ENCODE measurements at regions of chr11 and their contacts with region 1.

Region 1: DNA sequence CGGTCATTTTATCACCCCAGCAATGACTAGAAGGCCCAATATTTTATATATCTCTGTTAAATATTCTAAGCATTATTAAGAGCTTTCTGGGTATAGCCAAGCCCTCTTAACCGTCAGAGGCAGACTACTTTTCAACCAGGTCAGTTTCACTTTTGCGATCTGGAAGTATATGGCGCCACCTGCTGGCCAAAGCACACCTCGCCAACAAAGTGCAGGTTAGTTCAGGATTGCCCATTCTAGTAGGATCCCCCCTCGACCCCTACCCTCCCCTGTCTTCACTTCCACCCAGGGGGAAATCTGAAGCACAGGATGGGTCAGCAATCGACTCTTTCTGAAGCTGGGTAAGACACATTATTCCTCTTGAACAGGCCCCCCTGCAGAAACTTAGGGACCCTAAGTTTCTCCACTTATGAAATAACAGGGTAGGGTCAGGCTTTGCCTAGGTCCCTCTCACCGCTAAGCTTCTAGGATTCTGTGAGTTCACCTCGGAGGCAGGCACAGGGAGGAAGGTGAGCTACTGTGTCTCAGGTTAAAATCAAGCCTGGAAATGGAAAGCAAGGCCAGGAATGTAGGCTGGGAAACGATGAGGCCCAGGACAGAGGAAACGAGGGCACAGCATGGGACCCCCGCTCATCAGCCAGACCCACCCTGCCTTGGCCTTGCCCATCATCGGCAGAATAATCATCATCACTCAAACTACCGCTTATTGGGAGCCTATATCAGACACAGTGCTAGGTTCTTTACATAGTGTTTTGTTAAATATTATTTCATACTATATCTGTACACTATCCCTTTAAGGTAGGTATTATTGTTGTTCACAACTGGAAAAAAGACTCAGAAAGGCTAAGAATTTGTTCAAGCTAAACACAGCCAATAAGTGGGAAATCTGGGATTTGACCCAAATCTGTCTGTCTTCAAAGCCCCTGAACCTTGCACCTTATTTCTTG is 35.6 kb downstream of the KCNJ1 start:
- DNase-seq: peak; percentile 53 to 58
- ATAC-seq: peak; percentile 79 to 89
- H3K4me3 ChIP-seq: peak overlapping the region in 3 of 4 donors; percentile 19 to 34 (median 26)
- H3K27ac ChIP-seq: no peak overlapping the region
- H3K4me1 ChIP-seq: peaks cover 3 to 5% of the 10 kb centered on the region in 2 donors
- H3K27me3 ChIP-seq: peaks cover 0 to 3% (median 0%) of the 10 kb centered on the region in 3 donors
- CTCF ChIP-seq: peak; percentile 40 to 89 (median 82)
- POLR2A ChIP-seq: no peak

Region 2: DNA sequence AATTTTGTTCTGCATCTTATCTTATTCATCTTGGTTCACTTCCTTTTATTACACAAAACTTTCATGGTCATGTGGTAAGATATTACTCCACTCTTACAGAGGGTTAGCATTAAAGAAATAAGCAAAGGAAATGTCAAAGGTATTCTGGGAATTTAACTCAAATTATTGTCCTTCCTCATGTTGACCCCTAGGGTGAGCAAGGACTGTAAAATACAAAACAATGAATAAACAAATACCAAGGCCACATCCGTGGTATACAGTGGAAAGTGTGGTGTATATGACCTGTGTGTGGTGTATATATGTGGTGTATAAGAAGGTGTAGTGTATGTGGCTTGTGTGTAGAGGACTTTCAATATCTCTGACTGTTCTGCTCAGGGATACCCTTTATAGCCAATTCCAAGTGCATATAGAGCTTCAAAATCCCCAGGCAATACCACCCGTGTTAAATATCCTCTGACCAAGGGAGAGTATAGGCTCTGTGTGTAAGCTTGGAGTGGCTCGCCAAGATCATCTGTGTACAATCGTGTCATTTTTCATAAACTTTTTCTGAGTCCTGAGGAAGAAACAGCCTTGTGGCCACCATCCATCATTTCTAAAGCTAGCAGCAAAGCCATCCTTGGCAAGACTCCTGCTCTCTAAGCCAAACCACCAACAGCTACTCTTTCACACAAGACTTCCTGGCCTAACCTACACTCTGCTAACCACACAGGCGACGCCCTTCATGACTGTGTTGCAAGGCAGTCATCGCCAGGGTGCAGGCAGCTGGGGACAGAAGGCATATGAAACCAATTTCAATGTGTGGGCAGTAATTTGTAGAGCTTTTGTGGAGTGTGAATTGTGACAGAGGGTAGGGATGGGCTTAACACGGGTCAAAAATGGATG is 792.1 kb before region 1 on chr11:
- in situ Hi-C with region 1: loop called in 2 of 4 experiments (anchors 25 kb)
- intact Hi-C with region 1: no loop called
- DNase-seq: peak in 1 of 2 donors; percentile 51
- ATAC-seq: peak; percentile 58 to 70
- H3K4me3 ChIP-seq: no peak overlapping the region
- H3K27ac ChIP-seq: no peak overlapping the region
- H3K4me1 ChIP-seq: no peaks in the 10 kb centered on the region
- H3K27me3 ChIP-seq: no peaks in the 10 kb centered on the region
- CTCF ChIP-seq: peak in 1 of 5 experiments; percentile 14
- POLR2A ChIP-seq: no peak

Region 3: DNA sequence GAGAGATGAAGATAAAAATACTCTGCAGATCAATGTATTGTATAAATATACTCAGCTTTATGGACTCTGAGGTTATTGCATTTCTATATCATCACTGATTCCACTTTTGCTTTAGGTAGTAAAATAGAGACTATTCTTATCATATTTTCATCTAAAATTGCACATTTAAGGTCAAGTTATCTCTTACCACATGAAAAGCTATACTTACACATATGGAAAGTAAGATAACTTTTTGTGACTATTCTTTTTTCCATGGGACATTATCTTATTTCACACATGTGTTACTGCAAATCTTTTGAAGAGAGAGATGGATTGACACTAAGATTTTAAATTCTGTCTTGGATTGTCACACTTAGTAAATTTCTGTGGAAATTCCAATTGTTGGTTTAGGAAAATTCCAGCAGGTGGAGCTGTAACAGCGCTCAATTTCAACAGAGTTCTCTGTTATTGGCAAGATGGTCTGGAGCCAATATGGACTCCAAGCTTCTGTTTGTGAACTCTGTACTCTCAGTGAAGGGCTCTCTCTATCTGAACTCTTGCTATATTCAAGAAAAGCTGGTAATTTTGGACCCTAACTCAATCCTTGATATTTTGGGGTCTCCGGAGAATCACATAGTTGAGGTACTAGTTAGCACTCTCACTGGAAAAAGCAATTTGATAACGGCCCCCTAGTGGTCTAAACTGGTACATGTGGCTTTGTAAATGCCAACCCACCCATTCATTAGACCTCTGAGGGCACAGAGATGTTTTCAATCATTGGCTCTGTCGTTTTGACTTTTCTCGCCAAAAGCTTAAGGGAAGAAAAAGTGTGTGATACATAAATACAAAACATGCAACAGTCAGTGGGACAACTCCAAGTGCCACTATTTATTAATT is 673.8 kb before region 1 on chr11:
- in situ Hi-C with region 1: no loop called
- intact Hi-C with region 1: loop called (anchors 5 kb)
- DNase-seq: no peak
- ATAC-seq: peak; percentile 68 to 86
- H3K4me3 ChIP-seq: peak overlapping the region in 1 of 4 donors; percentile 14
- H3K27ac ChIP-seq: no peak overlapping the region
- H3K4me1 ChIP-seq: no peaks in the 10 kb centered on the region
- H3K27me3 ChIP-seq: no peaks in the 10 kb centered on the region
- CTCF ChIP-seq: peak; percentile 63 to 78 (median 73)
- POLR2A ChIP-seq: no peak

Region 4: DNA sequence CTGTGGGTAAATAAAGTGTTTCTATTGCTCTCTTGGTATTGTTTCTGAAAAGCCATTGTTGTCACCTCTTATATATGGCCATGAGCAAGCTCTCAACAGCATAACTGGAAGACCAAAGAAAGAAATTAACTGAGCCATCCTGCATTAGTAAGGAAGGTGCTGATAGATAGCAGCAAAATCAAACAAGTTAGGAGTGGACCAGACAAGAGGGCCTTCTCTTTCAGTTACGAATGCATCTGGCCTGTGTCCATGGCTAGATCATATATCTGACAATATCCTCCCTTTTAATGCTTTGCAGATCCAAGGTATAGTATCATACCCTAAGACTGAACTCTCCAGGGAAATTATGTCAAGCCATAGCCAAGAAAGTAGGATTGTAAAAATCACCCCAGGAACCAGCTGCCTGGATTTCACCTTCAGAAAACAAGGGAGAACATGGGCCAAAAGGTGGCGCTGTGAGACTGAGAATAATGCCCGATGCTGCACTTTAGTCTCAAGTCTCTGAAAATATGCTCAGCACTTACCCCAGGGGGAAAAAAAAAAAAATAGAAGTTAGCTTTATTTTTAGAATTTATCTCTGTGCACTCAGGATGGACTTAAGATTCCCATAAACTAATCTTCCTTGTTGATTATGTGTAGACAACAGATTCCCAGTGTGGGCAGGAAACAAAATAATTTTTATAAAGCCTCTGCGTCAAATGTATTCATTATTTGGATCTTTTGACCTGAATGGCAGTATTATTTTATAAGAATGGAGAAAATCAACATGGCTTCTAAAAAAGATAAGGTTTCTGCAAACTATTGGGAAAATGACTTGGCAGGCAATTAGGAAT is 659.2 kb before region 1 on chr11:
- in situ Hi-C with region 1: loop called (anchors 5 to 10 kb)
- intact Hi-C with region 1: loop called (anchors 1 kb)
- DNase-seq: peak; percentile 31 to 55
- ATAC-seq: peak; percentile 60 to 65
- H3K4me3 ChIP-seq: no peak overlapping the region
- H3K27ac ChIP-seq: no peak overlapping the region
- H3K4me1 ChIP-seq: no peaks in the 10 kb centered on the region
- H3K27me3 ChIP-seq: no peaks in the 10 kb centered on the region
- CTCF ChIP-seq: peak; percentile 61 to 76 (median 65)
- POLR2A ChIP-seq: no peak

Region 5: GRCh38 chr11:128290106-128290840 is 541.2 kb before region 1 on chr11:
- in situ Hi-C with region 1: loop called (anchors 25 kb)
- intact Hi-C with region 1: loop called (anchors 2 kb)
- DNase-seq: peak; percentile 35 to 47
- ATAC-seq: peak; percentile 96 to 97
- H3K4me3 ChIP-seq: peak overlapping the region; percentile 10 to 35 (median 20)
- H3K27ac ChIP-seq: peak overlapping the region; percentile 50 to 59 (median 53)
- H3K4me1 ChIP-seq: peaks cover 9% of the 10 kb centered on the region in 2 donors
- H3K27me3 ChIP-seq: no peaks in the 10 kb centered on the region
- CTCF ChIP-seq: peak; percentile 80 to 88 (median 85)
- POLR2A ChIP-seq: no peak

Region 6: DNA sequence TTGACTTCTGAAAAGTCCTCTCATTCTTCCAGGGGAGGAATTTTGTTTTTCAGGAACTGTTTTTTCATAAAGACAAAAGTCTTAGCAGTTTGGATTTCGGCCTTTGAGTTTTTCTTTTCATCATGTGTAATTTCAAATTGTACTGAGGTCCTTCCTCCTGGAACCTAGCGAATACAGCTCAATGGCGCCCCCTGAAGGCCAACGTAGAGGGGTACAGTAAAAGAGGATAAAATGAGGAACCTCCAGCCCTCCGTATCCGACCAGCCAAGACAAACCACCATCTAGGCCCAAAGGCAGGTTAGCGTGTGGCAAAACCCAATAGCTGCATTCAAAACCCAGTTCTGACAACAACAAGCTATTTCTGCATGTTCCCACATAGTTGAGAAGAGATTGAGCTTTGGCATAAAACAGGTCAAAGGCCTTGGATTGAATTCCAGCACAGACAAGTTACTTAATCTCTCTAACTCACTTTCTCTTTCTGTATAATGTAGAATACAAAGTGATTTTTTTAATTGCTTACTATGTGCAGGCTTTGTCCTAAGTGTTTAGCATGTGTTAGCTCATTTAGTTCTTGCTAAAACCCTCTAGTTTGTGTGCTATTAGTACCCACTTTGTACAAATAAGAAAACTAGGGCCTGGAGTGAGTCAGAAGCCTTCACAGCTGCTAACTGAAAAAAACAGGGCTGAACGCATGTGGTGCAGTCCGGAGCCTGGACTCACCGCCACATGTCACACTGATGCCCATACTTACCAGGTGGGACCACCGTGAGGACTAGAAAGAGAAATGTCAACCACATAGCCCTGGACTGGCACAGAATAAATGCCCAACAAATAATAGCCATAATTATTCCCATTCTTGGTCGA is 200.8 kb before region 1 on chr11:
- in situ Hi-C with region 1: loop called in 3 of 4 experiments (anchors 10 to 25 kb)
- intact Hi-C with region 1: loop called (anchors 5 kb)
- DNase-seq: peak; percentile 62 to 71
- ATAC-seq: peak; percentile 90 to 94
- H3K4me3 ChIP-seq: no peak overlapping the region
- H3K27ac ChIP-seq: no peak overlapping the region
- H3K4me1 ChIP-seq: peaks cover 0 to 12% of the 10 kb centered on the region in 2 donors
- H3K27me3 ChIP-seq: no peaks in the 10 kb centered on the region
- CTCF ChIP-seq: peak; percentile 81 to 91 (median 87)
- POLR2A ChIP-seq: no peak

Region 7: DNA sequence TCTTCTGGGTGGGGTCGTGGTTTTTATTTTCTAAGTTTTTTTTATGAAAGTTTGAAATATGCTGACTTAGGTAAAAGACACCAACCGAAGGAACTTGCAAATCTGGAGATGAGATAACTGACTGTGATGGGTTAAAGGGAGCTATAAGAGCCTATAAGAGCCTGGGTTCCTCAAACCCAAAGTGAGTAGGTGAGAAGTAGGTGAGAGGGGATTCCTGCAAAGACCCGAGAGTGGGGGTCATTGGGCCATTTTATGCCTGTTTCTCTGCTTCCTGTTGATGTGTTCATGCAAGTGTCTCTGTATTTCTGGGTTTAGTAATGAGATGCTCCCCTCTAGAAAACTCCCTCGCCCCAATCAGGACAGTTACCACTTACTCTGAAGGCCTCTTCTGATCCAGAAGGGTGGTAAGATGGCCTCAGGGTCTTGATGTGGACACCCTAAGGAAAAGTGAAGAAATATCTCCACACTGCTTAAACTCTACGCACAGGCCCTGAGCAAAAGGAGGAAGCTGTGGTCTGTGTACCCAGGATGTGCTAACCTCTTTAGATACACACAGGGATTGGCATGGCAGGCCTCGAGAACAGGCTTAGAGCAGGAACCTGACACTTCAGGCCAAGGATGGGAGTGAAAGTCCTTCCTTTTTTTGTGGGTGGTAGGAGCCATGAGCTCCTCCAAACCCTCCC is 135.8 kb before region 1 on chr11:
- in situ Hi-C with region 1: no loop called
- intact Hi-C with region 1: loop called (anchors 10 kb)
- DNase-seq: no peak
- ATAC-seq: no peak
- H3K4me3 ChIP-seq: peak overlapping the region; percentile 62 to 83 (median 64)
- H3K27ac ChIP-seq: peak overlapping the region; percentile 73 to 83 (median 80)
- H3K4me1 ChIP-seq: peaks cover 12 to 16% of the 10 kb centered on the region in 2 donors
- H3K27me3 ChIP-seq: peaks cover 31 to 51% (median 34%) of the 10 kb centered on the region in 3 donors
- CTCF ChIP-seq: no peak
- POLR2A ChIP-seq: no peak

Region 8: GRCh38 chr11:128841461-128842072 is 10.1 kb after region 1 on chr11:
- in situ Hi-C with region 1: no loop called
- intact Hi-C with region 1: no loop called
- DNase-seq: no peak
- ATAC-seq: no peak
- H3K4me3 ChIP-seq: no peak overlapping the region
- H3K27ac ChIP-seq: no peak overlapping the region
- H3K4me1 ChIP-seq: peaks cover 0 to 6% of the 10 kb centered on the region in 2 donors
- H3K27me3 ChIP-seq: peaks cover 0 to 3% (median 0%) of the 10 kb centered on the region in 3 donors
- CTCF ChIP-seq: no peak
- POLR2A ChIP-seq: no peak

Region 9: GRCh38 chr11:129090056-129090455 is 258.6 kb after region 1 on chr11:
- in situ Hi-C with region 1: no loop called
- intact Hi-C with region 1: no loop called
- DNase-seq: no peak
- ATAC-seq: no peak
- H3K4me3 ChIP-seq: no peak overlapping the region
- H3K27ac ChIP-seq: no peak overlapping the region
- H3K4me1 ChIP-seq: no peaks in the 10 kb centered on the region
- H3K27me3 ChIP-seq: no peaks in the 10 kb centered on the region
- CTCF ChIP-seq: no peak
- POLR2A ChIP-seq: no peak

Measured in gastrocnemius medialis (tissue), 4 donors.